ENCODE measurements at regions of chr11 and their contacts with region 1.

Region 1: DNA sequence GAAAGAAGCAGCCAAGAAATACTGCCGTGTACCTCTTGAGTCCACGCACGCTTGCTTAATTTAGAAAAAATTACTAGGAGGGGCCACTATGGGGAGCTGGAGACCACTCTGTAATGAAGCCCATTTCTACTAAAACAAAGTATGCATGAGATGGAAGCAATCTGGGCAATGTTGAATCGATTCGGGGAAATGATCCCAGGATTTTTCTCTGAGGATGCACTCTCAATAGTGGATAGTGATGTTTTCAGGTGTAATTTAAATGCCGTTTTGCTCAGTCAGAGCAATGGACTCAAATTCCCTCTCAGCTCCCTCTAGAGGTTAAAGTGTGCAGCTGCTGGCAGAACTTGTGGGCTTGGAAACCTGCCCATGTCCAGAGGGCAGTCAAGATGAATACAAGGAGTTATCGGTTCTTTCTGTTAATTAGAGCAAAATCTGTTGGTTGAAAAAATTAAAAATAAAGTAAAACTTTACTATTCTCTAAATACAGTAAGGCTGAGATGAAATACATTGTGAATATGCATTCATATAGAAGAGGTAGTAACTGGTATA is 64.1 kb downstream of the ME3 start:
- DNase-seq: peak; percentile 57
- H3K4me3 ChIP-seq: no peak overlapping the region
- H3K27ac ChIP-seq: no peak overlapping the region
- H3K27me3 ChIP-seq: no peaks in the 10 kb centered on the region
- CTCF ChIP-seq: peak; percentile 94

Region 2: DNA sequence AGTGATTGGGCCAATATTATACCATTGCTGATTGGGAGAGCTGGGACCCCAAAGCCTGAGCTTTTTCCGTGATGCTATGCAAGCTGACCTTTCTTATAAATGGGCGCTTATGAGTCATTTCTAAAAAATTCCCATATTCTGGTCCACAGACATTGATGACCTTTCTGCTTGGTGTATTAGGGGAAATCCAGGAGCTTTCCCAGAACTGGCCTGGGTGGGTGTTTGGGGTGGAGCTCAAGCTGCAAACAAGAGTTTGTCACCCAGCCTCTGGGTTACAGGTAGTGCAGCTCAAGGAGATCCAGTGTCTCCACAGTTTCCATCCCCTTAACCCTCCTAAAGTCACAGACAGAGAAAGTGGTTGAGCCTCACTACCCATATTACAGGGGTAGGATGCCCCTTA is 165.9 kb before region 1 on chr11:
- CTCF ChIA-PET with region 1: interaction called, 13 read pairs
- POLR2A ChIA-PET with region 1: no interaction called
- DNase-seq: no peak
- H3K4me3 ChIP-seq: no peak overlapping the region
- H3K27ac ChIP-seq: no peak overlapping the region
- H3K27me3 ChIP-seq: no peaks in the 10 kb centered on the region
- CTCF ChIP-seq: no peak

Region 3: DNA sequence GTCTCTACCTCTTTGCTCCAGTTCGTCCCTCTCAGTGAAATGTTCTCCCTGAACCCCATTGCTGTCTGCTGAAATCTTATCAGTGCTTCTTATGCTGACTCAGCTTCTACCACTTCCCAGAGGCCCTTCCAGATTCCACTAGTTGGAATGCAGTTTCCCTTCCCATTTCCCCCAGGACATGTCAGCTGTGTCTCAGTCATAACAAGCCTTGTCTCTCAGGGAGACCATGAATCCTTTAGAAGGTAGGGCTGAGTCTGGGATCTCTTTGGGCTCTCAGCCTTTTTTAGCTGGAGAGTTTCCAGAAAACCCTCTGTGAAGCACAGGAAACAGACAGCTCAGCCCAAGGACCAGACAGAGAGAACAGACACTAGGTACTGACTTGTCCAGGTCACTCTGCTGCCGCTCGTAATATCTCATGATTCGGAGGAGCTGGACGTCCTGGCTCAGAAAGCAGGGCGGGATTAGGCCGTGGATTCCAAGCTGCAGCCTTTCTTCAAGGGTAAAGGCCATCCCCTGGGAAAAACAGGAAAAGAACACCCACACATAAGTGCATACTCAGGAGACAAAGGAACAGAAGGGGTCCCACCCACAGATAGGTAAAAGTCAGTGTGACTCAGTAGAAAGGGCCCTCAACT is 48.9 kb before region 1 on chr11:
- CTCF ChIA-PET with region 1: interaction called, 12 read pairs
- POLR2A ChIA-PET with region 1: no interaction called
- DNase-seq: no peak
- H3K4me3 ChIP-seq: no peak overlapping the region
- H3K27ac ChIP-seq: peak overlapping the region; percentile 31
- H3K27me3 ChIP-seq: no peaks in the 10 kb centered on the region
- CTCF ChIP-seq: no peak

Region 4: DNA sequence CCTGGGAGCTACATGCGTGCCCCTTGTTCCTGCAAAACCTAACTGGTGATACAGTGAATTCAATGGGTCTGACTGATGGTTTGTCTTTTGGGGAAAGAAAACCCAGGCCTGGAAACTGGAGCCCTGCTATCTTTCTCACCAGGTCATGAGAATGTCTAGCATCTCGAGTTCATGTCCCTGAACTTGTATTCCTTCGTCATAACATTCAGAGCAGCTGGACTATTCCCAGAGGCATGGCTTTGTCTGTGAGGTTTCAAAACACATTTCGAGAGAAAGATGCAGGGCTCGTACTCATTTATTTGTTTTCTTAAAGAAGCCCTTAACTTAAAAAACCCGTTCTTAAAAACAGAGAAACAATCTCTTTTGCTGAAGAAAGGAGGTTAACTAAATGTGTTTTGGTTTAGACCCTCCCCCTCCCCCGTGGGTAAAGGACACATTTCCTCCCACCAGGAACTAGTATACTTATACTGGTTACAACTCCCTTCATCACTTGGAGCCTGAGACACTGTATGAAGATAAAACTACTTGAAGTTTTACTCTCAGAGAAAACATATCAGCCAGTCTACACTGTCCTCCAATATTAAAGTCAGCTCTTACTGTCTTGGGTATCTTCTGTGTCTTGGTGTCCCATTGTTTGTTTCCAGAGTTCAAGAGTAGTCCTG is 20.9 kb after region 1 on chr11:
- CTCF ChIA-PET with region 1: interaction called, 20 read pairs
- POLR2A ChIA-PET with region 1: no interaction called
- DNase-seq: no peak
- H3K4me3 ChIP-seq: no peak overlapping the region
- H3K27ac ChIP-seq: no peak overlapping the region
- H3K27me3 ChIP-seq: no peaks in the 10 kb centered on the region
- CTCF ChIP-seq: no peak

Region 5: DNA sequence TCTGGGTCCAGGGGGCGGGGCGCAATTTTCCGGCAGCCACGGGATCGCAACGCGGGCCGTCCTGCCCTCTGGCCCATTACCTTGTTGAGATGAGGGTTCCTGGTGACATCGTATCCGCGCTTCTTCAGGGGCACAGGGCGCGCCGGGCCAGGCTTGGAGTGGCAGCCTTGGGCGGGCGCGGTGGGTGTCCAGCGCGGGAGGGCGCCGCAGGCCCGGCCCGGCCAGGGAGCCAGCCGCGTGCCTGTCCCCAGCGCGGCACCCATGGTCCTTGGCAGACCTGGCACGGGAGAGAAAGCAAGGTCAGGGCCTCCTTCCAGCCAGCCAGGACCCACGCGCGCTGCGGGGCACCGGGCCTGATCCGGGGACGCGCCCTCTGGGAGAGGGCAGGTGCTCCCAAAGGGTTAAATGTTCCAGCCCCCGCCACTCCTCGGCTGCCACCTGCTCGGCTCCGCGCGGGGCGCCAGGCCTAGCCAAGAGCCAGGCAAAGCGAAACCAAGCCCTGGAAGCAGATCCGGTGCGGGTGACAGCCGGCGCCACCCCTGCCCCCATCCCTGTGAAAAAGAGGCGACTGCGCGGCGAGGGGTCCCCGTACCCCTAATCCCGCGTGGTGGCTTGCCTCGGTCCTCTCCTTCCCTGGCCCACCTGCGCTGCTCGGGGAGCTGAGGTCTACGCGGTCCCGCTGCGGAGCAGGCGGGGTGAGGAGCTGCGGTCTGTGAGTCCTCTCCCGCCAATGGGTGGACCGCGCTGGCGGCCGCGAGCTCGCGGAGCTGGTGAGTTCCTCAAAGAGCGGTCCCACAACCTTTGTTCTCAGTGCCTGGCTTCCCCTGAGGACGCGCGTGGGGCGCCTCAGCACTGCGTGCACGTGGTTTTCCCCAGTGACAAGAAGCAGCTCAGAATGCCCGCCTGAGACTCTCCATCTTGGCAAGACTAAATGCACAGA is 63.6 kb after region 1 on chr11 and contains the start of gene ME3:
- CTCF ChIA-PET with region 1: interaction called, 12 read pairs
- POLR2A ChIA-PET with region 1: no interaction called
- DNase-seq: no peak
- H3K4me3 ChIP-seq: peak within 1 kb of the TSS; percentile 74
- H3K27ac ChIP-seq: peak within 1 kb of the TSS; percentile 54
- H3K27me3 ChIP-seq: no peaks in the 10 kb centered on the region
- CTCF ChIP-seq: no peak
- polyA plus RNA-seq, gene ME3: 7.1 and 8.6 TPM in 2 replicates

Region 6: DNA sequence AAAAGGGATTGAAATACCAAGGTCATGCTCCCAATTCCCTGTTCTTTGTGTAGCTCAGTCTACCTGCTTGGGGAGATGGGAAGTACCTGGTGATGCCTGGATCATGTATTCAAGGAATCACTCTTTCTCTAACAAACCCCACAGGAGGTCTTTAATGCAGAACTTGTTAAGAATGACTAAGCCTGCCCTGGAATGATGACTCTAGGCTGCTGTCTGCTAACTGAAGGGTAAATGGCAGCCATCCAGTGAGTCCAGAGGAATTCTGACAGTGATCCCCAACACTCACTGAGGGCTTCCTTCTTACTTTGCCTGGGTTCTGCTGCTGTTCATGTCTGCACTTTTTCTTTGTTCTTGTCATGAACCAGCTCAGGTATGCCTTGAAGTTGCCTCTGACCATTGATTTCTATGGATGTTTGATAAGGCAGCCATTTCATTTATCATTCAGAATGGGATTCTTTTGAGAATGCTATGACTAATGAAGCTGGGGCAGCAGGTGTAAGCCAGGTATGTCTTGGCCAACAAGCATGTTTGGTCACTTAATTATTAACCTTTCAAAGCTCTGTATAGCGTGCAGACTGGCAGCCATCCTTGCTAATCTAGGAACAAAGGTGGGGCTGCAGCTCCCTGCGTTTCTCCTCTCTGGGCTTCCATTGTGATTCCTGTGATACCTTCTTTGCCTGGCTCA is 203.5 kb after region 1 on chr11:
- CTCF ChIA-PET with region 1: interaction called, 47 read pairs
- POLR2A ChIA-PET with region 1: no interaction called
- DNase-seq: peak; percentile 47
- H3K4me3 ChIP-seq: no peak overlapping the region
- H3K27ac ChIP-seq: no peak overlapping the region
- H3K27me3 ChIP-seq: no peaks in the 10 kb centered on the region
- CTCF ChIP-seq: no peak

Measured in AG04450 (cell line).